ENCODE measurements at regions of chr11 and their contacts with region 1.

Region 1: DNA sequence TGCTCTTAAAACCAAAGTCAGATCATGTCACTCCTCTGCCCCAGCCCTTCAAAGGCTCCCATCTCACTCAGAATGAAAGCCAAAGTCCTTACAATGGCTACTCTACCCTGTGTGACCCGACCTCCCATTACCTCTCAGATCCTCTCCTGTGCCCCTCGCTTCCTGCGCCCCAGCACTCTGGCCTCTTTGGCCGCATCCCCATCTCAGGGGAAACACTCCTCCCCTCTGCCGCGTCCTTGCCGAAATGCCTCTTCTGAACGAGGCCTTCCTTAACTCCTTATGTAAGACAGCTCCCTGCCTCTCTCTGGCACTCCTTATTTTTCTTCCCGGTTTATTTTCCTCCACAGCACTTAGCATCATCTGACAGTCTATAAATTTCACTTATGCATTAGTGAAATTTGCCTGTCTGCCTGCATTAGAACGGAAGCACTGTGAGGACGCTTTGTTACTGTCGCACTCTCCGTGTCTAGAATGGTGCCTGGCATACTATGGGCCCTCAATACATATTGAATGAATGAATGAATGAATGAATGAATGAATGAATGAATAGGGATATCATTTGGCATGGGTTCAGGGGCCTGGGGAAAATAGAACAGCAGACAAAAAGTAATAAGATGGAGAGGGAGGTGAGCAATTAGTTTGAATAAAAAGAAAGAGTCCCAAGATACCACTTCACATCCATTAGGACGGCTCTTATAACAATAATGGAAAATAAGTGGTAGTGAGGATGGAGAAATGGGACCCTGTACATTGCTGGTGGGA is 137.8 kb downstream of the CEP164 start:
- DNase-seq: no peak
- H3K4me3 ChIP-seq: no peak overlapping the region
- H3K27ac ChIP-seq: no peak overlapping the region
- H3K4me1 ChIP-seq: no peaks in the 10 kb centered on the region
- CTCF ChIP-seq: no peak

Region 2: GRCh38 chr11:117520966-117521365 is 55.5 kb after region 1 on chr11:
- CTCF ChIA-PET with region 1: interaction called, 11 read pairs
- POLR2A ChIA-PET with region 1: no interaction called
- intact Hi-C with region 1: no loop called
- DNase-seq: no peak
- H3K4me3 ChIP-seq: no peak overlapping the region
- H3K27ac ChIP-seq: no peak overlapping the region
- H3K4me1 ChIP-seq: no peaks in the 10 kb centered on the region
- CTCF ChIP-seq: no peak